H1 (cell line): ENCODE measurements at regions of chr6 and their contacts with region 1.

Region 1: GRCh38 chr6:22036275-22036674 is 260.6 kb downstream of the PRL start:
- DNase-seq: peak; percentile 34 to 58
- H3K4me3 ChIP-seq: no peak overlapping the region; a peak in 1 of 8 replicates
- H3K27ac ChIP-seq: no peak overlapping the region
- H3K4me1 ChIP-seq: peaks cover 0 to 11% (median 6%) of the 10 kb centered on the region in 4 experiments; a peak in 5 of 7 replicates
- H3K27me3 ChIP-seq: no peaks in the 10 kb centered on the region
- CTCF ChIP-seq: no peak
- EP300 ChIP-seq: no peak
- POLR2A ChIP-seq: no peak
- RAD21 ChIP-seq: no peak

Region 2: DNA sequence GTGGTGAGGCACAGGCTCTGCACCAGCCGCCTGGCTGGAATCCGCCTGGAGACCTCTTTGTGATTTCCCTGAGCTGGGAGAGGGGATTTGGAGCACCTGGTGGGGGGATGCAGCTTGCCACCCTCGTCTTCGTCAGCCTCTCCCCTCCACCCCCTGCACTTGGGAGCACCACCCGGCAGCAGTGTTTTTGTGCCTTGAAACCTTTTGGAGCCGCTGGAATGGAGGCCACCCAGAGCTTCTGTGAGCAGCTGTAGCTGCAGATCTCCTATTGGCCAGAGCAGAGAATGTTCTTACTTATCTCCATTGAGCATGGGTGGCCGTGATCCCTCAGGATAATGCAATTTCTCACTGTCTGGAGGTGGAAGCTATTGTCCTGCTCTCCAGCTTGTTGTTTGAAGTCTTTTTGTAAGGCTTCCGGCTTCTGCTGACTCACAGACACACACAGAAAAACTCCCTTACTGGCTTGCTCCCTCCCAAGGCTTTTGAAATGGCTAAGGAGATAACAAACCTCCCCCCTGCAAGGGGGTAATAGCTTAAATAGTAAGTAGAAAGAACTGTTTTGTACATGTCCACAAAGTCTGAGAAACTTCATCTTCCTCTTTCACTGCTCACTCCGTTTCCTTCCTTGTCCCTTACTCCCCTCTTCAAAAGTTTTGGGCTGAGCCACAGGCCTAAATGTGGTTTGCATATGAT is 10.7 kb before region 1 on chr6:
- CTCF ChIA-PET with region 1: interaction called, 4 read pairs
- POLR2A ChIA-PET with region 1: interaction called, 11 read pairs
- DNase-seq: peak; percentile 59 to 78
- H3K4me3 ChIP-seq: peak overlapping the region in 1 of 4 experiments; percentile 25; a peak in 2 of 8 replicates
- H3K27ac ChIP-seq: peak overlapping the region; percentile 75
- H3K4me1 ChIP-seq: peaks cover 6 to 18% (median 9%) of the 10 kb centered on the region in 4 experiments; a peak in 6 of 7 replicates
- H3K27me3 ChIP-seq: no peaks in the 10 kb centered on the region
- CTCF ChIP-seq: no peak
- EP300 ChIP-seq: peak in 1 of 2 experiments; percentile 72; a peak in 2 of 3 replicates
- POLR2A ChIP-seq: peak in 1 of 2 experiments; percentile 31; a peak in 1 of 3 replicates
- RAD21 ChIP-seq: 0 out of 4 replicates have a peak, but pooled peaks of 1 of the 2 experiments have one; percentile 9

Region 3: DNA sequence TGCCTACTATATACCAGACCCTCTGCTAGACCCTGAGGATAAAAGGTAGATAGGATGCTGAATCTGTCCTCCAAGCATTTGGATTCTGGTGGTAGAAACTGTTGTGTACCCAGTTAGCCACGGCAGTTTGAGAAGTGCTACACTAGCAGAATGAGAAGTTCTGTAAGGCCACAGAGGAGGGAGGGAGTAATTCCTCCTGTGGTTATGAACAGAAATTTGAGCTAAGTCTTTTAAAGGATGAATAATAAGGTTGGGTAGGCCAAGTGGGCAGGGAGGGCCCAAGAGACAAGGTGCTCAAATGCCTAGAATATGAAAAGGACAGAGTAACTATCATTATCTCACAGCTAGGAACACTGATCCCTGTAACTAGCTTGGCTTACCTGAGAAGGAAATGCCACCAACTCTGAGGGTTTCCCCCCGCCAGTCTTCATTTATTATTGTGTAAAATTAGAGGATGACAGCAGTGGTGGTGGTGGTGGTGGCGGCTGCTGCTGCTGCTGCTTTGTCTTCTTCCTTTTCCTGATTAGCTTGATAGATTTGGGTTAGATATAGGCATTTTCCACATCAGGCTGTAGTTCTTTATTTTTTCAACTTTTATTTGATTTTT is 17.2 kb after region 1 on chr6:
- CTCF ChIA-PET with region 1: no interaction called
- POLR2A ChIA-PET with region 1: no interaction called
- DNase-seq: no peak
- H3K4me3 ChIP-seq: no peak overlapping the region
- H3K27ac ChIP-seq: no peak overlapping the region
- H3K4me1 ChIP-seq: peaks cover 0 to 4% (median 0%) of the 10 kb centered on the region in 4 experiments; a peak in 1 of 7 replicates
- H3K27me3 ChIP-seq: no peaks in the 10 kb centered on the region
- CTCF ChIP-seq: no peak
- EP300 ChIP-seq: no peak
- POLR2A ChIP-seq: no peak
- RAD21 ChIP-seq: no peak

Region 4: GRCh38 chr6:22199771-22200170 is 163.5 kb after region 1 on chr6:
- CTCF ChIA-PET with region 1: no interaction called
- POLR2A ChIA-PET with region 1: no interaction called
- DNase-seq: no peak
- H3K4me3 ChIP-seq: no peak overlapping the region
- H3K27ac ChIP-seq: no peak overlapping the region
- H3K4me1 ChIP-seq: no peaks in the 10 kb centered on the region
- H3K27me3 ChIP-seq: no peaks in the 10 kb centered on the region
- CTCF ChIP-seq: no peak
- EP300 ChIP-seq: no peak
- POLR2A ChIP-seq: no peak
- RAD21 ChIP-seq: no peak

Region 5: DNA sequence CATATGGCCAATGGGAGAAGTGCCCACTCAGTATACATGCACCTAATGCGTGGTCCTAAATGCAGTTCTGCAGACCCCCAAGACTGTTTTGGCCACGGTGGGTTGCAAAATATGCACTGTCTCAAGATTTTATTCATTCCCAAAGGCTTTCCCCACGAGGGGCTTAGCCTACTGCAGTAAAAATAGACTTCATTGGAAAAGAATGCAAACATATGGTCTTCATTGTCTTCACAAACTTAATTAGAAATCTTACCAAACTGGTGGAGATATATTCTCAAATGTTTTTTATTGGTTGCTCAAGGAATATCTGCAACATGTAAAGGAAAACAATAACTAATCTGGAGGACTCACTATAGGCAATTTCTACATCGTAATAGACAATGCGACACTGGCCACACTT is 292.2 kb after region 1 on chr6:
- CTCF ChIA-PET with region 1: no interaction called
- POLR2A ChIA-PET with region 1: no interaction called
- DNase-seq: no peak
- H3K4me3 ChIP-seq: no peak overlapping the region
- H3K27ac ChIP-seq: no peak overlapping the region
- H3K4me1 ChIP-seq: no peaks in the 10 kb centered on the region
- H3K27me3 ChIP-seq: peaks cover 0 to 1% (median 0%) of the 10 kb centered on the region in 4 experiments; a peak in 1 of 7 replicates
- CTCF ChIP-seq: no peak
- EP300 ChIP-seq: no peak
- POLR2A ChIP-seq: no peak
- RAD21 ChIP-seq: no peak